ENCODE measurements at regions of chr11 and their contacts with region 1.

Region 1: GRCh38 chr11:59810189-59810910 is at the start of gene MRPL16:
- DNase-seq: peak; percentile 87 to 93 (median 89)
- ATAC-seq: peak; percentile 95 to 99 (median 98)
- H3K4me3 ChIP-seq: peak within 1 kb of the TSS; percentile 74 to 97 (median 90)
- H3K27ac ChIP-seq: peak within 1 kb of the TSS; percentile 63 to 91 (median 86)
- H3K4me1 ChIP-seq: peaks cover 0 to 22% (median 12%) of the 10 kb centered on the region in 12 donors
- H3K27me3 ChIP-seq: no peaks in the 10 kb centered on the region
- CTCF ChIP-seq: peak in 3 of 12 donors; percentile 14 to 27 (median 17)
- POLR2A ChIP-seq: peak in 1 of 2 donors; percentile 48
- total RNA-seq, gene MRPL16: 59.3 to 117 (median 84.9) TPM

Region 2: DNA sequence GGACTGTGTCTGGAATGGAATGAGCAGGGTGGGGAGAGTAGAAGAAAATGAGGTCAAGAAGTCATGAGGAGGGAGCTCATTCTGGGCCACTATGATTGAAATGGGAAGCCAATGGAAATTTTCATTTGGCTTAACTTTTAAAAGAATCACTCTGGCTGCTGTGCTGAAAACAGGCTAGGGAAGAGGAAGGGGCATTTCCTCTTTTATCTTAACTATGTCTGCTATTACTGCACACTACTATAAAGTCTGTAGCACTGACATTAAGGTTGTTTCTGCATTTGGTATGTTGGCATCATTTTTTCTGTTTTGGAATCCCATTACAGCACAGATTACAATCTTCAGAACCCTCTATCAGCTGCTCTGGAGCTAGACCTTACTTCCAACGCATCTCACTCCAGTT is 149.7 kb before region 1 on chr11:
- intact Hi-C with region 1: loop called in 2 of 10 experiments (anchors 5 to 10 kb)
- DNase-seq: no peak
- ATAC-seq: no peak
- H3K4me3 ChIP-seq: no peak overlapping the region
- H3K27ac ChIP-seq: peak overlapping the region in 1 of 12 donors; percentile 27
- H3K4me1 ChIP-seq: peaks cover 0 to 52% (median 3%) of the 10 kb centered on the region in 12 donors
- H3K27me3 ChIP-seq: no peaks in the 10 kb centered on the region
- CTCF ChIP-seq: no peak
- POLR2A ChIP-seq: no peak